CD8-positive, alpha-beta T cell (primary cell): ENCODE measurements at regions of chr3 and their contacts with region 1.

Region 1: DNA sequence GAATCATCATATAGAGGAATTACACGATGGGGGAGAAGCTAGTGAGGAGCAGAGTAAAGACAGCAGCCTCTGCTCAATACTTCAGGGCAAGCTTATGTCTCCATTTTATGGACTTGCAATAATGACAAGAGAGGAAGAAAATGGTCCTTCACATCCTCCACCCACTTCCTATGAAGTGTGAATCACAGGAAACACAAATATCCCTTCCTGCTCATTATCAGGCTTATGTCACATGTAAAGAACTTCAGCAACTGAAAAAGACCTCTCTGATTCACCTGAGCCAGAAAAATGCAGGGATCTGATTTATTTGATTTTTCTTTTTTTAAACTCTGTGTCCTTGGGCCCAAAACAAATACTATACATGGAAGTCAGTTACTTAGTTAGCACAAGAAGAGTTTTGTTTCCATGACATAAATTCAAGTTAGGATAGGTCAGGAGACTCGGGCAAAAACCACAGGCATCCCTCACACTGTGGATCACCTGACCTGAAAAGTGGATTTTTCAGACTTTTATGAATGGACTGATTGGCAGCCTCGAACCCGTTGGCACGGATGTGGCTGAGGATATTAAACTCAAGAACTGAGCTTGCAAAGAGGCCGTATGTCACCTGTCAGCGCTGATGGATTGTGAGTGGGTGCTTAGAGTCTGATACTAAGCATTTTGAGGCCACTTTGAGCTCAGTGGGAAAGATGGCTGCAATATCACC is 620.8 kb upstream of the MDFIC2 start:
- DNase-seq: no peak
- ATAC-seq: no peak
- H3K4me3 ChIP-seq: no peak overlapping the region
- H3K4me3 Mint-ChIP-seq: no peak overlapping the region
- H3K27ac ChIP-seq: no peak overlapping the region
- H3K27ac Mint-ChIP-seq: no peak overlapping the region
- H3K4me1 ChIP-seq: no peaks in the 10 kb centered on the region
- H3K4me1 Mint-ChIP-seq: peaks cover 2% of the 10 kb centered on the region
- H3K27me3 ChIP-seq: no peaks in the 10 kb centered on the region
- H3K27me3 Mint-ChIP-seq: no peaks in the 10 kb centered on the region
- CTCF ChIP-seq: no peak

Region 2: DNA sequence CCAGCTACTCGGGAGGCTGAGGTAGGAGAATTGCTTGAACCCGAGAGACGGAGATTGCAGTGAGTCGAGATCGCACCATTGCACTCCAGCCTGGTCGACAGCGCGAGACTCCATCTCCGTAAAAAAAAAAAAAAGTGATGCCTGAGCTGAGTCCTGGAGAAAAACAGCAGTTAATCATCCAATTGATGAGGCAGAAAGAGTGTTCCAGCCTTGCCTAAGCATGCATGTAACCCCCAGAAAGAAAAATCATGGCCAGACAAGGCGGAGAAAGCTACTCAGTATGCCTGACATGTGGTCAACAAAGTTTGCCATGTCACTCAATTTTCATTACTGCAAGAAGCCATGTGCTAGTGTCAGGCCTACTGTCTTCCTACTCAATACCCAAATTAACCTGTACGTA is 27.8 kb before region 1 on chr3:
- CTCF ChIA-PET with region 1: no interaction called
- POLR2A ChIA-PET with region 1: no interaction called
- intact Hi-C with region 1: loop called in 1 of 2 experiments (anchors 1 kb)
- DNase-seq: no peak
- ATAC-seq: no peak
- H3K4me3 ChIP-seq: no peak overlapping the region
- H3K4me3 Mint-ChIP-seq: no peak overlapping the region
- H3K27ac ChIP-seq: no peak overlapping the region
- H3K27ac Mint-ChIP-seq: no peak overlapping the region
- H3K4me1 ChIP-seq: no peaks in the 10 kb centered on the region
- H3K4me1 Mint-ChIP-seq: no peaks in the 10 kb centered on the region
- H3K27me3 ChIP-seq: no peaks in the 10 kb centered on the region
- H3K27me3 Mint-ChIP-seq: peaks cover 18% of the 10 kb centered on the region
- CTCF ChIP-seq: no peak

Region 3: GRCh38 chr3:71195492-71195891 is 262.2 kb after region 1 on chr3:
- CTCF ChIA-PET with region 1: no interaction called
- POLR2A ChIA-PET with region 1: no interaction called
- intact Hi-C with region 1: no loop called
- DNase-seq: no peak
- ATAC-seq: no peak
- H3K4me3 ChIP-seq: no peak overlapping the region
- H3K4me3 Mint-ChIP-seq: no peak overlapping the region
- H3K27ac ChIP-seq: no peak overlapping the region
- H3K27ac Mint-ChIP-seq: no peak overlapping the region
- H3K4me1 ChIP-seq: peaks cover 4% of the 10 kb centered on the region
- H3K4me1 Mint-ChIP-seq: peaks cover 63% of the 10 kb centered on the region
- H3K27me3 ChIP-seq: no peaks in the 10 kb centered on the region
- H3K27me3 Mint-ChIP-seq: no peaks in the 10 kb centered on the region
- CTCF ChIP-seq: no peak